Panc1 (cell line): ENCODE measurements at regions of chr2 and their contacts with region 1.

Region 1: GRCh38 chr2:71323386-71323785 is 8.2 kb upstream of the ZNF638 start:
- DNase-seq: no peak
- ATAC-seq: no peak
- H3K4me3 ChIP-seq: no peak overlapping the region
- H3K27ac ChIP-seq: no peak overlapping the region
- H3K4me1 ChIP-seq: peaks cover 4% of the 10 kb centered on the region; the same call in 1 of the 2 replicates
- H3K27me3 ChIP-seq: no peaks in the 10 kb centered on the region
- CTCF ChIP-seq: no peak

Region 2: GRCh38 chr2:71122387-71123298 is 200.7 kb before region 1 on chr2:
- CTCF ChIA-PET with region 1: no interaction called
- POLR2A ChIA-PET with region 1: no interaction called
- in situ Hi-C with region 1: no loop called
- intact Hi-C with region 1: no loop called
- DNase-seq: no peak
- ATAC-seq: no peak
- H3K4me3 ChIP-seq: no peak overlapping the region
- H3K27ac ChIP-seq: no peak overlapping the region
- H3K4me1 ChIP-seq: no peaks in the 10 kb centered on the region
- H3K27me3 ChIP-seq: no peaks in the 10 kb centered on the region
- CTCF ChIP-seq: no peak

Region 3: DNA sequence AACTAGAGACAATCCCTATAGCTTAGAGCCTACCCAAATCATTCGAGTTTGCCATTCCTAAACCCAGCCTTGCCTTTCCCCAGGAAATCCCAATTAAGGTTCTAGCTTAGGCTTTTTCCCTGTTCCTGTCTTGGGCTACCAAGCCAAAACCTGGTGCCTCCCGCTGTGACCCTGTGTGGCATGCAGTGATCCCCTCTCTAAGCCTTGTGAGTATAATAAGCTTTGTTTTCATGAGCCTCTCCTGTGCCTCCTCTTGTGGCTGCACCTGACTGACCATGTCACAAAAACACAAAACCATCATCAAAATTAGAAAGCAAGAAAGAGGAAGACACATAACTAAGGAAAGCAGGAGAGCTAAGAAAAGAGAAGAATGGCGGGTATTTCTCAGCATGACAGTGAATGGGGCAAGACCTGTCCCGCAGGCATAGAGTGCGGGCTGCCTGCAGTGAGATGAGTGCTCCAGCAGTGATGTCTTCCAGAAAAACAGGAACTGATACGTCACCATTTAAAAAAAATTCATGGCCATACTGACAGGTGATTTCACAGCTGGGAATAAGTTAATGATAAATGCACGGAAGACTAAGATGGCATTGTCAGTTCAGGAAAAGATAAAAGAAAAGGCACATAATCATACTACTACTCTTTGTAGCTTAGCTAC is 87.3 kb before region 1 on chr2:
- CTCF ChIA-PET with region 1: no interaction called
- POLR2A ChIA-PET with region 1: no interaction called
- in situ Hi-C with region 1: no loop called
- intact Hi-C with region 1: no loop called
- DNase-seq: no peak
- ATAC-seq: no peak
- H3K4me3 ChIP-seq: no peak overlapping the region
- H3K27ac ChIP-seq: no peak overlapping the region
- H3K4me1 ChIP-seq: no peaks in the 10 kb centered on the region
- H3K27me3 ChIP-seq: peaks cover 6% of the 10 kb centered on the region; the same call in 1 of the 2 replicates
- CTCF ChIP-seq: no peak

Region 4: GRCh38 chr2:71358931-71359671 is 35.7 kb after region 1 on chr2:
- CTCF ChIA-PET with region 1: no interaction called
- POLR2A ChIA-PET with region 1: no interaction called
- in situ Hi-C with region 1: no loop called
- intact Hi-C with region 1: no loop called
- DNase-seq: no peak
- ATAC-seq: no peak
- H3K4me3 ChIP-seq: no peak overlapping the region
- H3K27ac ChIP-seq: no peak overlapping the region
- H3K4me1 ChIP-seq: no peaks in the 10 kb centered on the region
- H3K27me3 ChIP-seq: no peaks in the 10 kb centered on the region
- CTCF ChIP-seq: no peak

Region 5: GRCh38 chr2:71417300-71418202 is 94.2 kb after region 1 on chr2:
- CTCF ChIA-PET with region 1: no interaction called
- POLR2A ChIA-PET with region 1: interaction called, 11 read pairs
- in situ Hi-C with region 1: no loop called
- intact Hi-C with region 1: no loop called
- DNase-seq: no peak
- ATAC-seq: no peak
- H3K4me3 ChIP-seq: peak overlapping the region; percentile 30 to 32; a peak in 3 of 4 replicates
- H3K27ac ChIP-seq: peak overlapping the region; percentile 87
- H3K4me1 ChIP-seq: peaks cover 4% of the 10 kb centered on the region
- H3K27me3 ChIP-seq: no peaks in the 10 kb centered on the region
- CTCF ChIP-seq: no peak

Region 6: DNA sequence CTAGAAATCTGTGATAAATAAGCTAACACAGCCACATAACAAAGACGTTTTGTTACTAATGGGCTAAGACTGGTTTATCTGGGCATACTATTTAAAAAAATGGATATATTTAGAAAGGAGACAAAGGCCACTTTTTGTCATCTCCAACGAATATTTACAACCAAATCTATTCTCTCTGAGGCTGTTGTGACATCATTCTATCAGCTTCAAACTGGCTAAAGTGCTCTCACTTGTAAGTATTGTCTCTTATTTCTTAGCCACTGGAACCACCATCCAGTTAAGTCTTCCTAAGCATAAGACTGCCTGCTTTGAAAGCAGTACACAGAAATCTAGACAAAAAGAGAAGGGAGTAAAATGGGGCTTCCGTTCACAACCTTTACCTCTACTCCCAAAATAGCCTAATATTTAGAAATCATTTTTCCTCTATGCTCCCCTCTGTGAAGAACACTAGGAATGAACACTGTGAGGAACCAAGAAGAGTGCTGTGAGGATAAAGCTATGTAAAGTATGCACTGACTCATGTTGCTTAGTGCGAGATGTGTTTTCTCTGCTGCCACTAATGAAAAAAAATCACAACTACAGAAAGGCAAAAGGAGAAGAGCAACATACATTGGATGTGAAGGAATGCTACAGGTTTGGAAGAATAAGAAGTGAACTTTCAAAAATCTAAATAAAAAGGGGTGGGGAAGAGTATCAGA is 1238.4 kb after region 1 on chr2:
- CTCF ChIA-PET with region 1: interaction called, 12 read pairs
- POLR2A ChIA-PET with region 1: no interaction called
- in situ Hi-C with region 1: no loop called
- intact Hi-C with region 1: no loop called
- DNase-seq: no peak
- ATAC-seq: peak; percentile 84
- H3K4me3 ChIP-seq: no peak overlapping the region
- H3K27ac ChIP-seq: 0 out of 2 replicates have a peak overlapping the region, but pooled peaks have one; percentile 17
- H3K4me1 ChIP-seq: peaks cover 3% of the 10 kb centered on the region
- H3K27me3 ChIP-seq: no peaks in the 10 kb centered on the region
- CTCF ChIP-seq: no peak